Activated T-helper 2 cell treated with anti-CD3 and anti-CD28 coated beads, Interferon-gamma antibody, Interleukin-2, Interleukin-4, amounts not matched to agents 10 μg/mL and 5 μg/mL and 100 μg/mL, durations not matched to agents 14 hours and 24 hours and 36 hours (primary cell): ENCODE measurements at regions of chr20 and their contacts with region 1.

Region 1: GRCh38 chr20:3051385-3052019 is 5.7 kb downstream of the MRPS26 start:
- DNase-seq: no peak
- H3K4me3 Mint-ChIP-seq: no peak overlapping the region
- H3K27ac Mint-ChIP-seq: no peak overlapping the region
- H3K4me1 Mint-ChIP-seq: peaks cover 8% of the 10 kb centered on the region
- H3K27me3 Mint-ChIP-seq: no peaks in the 10 kb centered on the region

Region 2: DNA sequence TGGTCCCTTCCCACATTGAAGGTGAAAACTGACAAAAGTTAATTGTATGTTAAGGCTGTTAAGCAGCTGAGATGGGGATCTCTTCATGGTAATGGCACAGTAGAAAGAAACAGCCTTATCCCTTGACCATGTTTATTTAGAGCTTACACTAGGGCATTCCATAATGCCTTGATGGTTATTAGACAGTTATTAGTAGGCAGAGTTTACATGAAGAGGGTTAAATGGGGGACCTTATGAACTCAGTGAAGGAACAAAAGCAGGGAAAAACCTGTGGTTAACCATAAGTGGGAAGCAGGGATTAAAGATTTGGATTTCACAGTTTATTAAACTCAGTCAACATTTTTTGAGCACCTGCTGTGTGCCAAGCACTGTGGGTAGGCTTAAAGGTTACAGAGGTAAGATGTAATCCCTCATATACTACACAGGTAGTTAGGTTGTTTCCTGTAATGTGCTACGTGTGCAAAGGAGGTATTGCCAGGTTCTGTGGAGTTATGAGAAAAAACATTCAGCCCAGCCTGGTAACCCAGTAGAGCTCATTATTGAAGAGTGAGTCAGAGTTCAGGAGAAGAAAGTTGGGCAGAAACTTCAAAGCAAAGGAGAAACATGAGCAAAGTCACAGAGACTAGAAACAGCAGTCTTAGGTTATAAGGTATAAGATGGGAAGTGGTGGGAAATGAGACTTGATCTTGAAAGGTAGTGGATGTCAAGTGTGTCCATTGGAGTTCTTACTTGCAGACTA is 40.3 kb before region 1 on chr20:
- intact Hi-C with region 1: no loop called
- DNase-seq: no peak
- H3K4me3 Mint-ChIP-seq: peak overlapping the region; percentile 1
- H3K27ac Mint-ChIP-seq: peak overlapping the region; percentile 94
- H3K4me1 Mint-ChIP-seq: peaks cover 57% of the 10 kb centered on the region
- H3K27me3 Mint-ChIP-seq: no peaks in the 10 kb centered on the region

Region 3: GRCh38 chr20:3115190-3116107 is 63.9 kb after region 1 on chr20:
- intact Hi-C with region 1: loop called (anchors 2 kb)
- DNase-seq: no peak
- H3K4me3 Mint-ChIP-seq: no peak overlapping the region
- H3K27ac Mint-ChIP-seq: no peak overlapping the region
- H3K4me1 Mint-ChIP-seq: peaks cover 2% of the 10 kb centered on the region
- H3K27me3 Mint-ChIP-seq: no peaks in the 10 kb centered on the region

Region 4: DNA sequence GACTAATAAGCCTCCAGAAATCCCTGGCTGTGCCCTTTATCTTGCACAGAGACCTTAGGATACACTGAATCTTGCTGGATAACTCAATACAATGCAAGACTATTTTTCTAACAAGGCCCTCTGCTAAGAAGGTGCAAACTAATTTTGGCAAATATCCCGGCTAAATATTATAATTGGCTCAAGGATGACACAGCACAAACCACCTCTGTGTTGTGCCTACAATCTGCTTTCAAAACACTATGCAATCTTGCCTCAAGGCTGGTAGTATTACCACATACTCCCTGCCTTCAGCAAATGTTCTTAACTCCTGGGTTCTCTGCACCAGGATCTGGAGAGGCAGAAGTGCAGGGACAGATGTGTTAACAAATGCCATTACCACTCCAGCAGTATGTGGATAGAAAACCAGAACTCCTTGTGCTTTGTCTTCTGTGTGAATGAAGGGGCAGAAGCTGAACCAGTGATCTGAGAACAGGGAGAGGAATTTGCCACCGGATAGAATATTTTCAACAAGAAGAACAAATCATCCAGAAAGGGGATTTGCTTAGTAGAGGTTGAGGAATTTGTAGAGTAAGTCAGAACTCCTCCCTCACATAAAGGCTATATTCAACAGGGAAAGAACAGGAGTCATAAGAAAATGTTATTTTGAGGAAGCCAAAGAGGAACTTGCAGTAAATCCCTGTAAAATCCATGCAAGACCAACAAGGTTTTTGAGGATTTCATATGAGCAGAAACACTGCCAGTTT is 261.6 kb after region 1 on chr20:
- intact Hi-C with region 1: loop called (anchors 10 kb)
- DNase-seq: no peak
- H3K4me3 Mint-ChIP-seq: no peak overlapping the region
- H3K27ac Mint-ChIP-seq: no peak overlapping the region
- H3K4me1 Mint-ChIP-seq: no peaks in the 10 kb centered on the region
- H3K27me3 Mint-ChIP-seq: no peaks in the 10 kb centered on the region